ENCODE measurements at regions of chr16 and their contacts with region 1.

Region 1: GRCh38 chr16:30052671-30053372 is 12.7 kb upstream of the ALDOA start:
- DNase-seq: peak; percentile 97
- CTCF ChIP-seq: no peak

Region 2: DNA sequence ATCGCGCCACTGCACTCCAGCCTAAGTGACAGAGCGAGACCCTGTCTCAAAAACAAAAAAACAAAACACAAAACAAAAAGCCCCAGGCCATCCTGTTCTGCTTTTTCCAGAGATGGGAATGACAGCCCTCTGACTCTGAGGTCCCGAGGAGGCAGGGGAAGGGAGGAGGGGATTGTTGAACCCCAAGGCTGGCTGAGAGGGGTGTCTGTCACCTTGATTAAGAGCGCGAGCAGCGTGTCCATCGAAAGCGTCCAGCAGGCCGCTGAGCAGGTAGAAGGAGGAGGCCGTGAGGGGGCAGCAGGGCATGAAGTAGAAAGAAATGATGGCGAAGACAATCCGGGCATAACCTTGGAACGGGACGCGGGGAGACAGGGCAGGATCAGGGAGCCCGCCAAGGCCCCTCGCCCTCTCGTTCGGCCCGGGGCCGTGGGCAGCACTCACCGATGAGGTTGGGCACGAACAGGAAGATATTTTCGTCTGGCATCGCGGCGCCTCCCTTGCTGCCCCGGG is 190.4 kb before region 1 on chr16:
- CTCF ChIA-PET with region 1: no interaction called
- POLR2A ChIA-PET with region 1: no interaction called
- DNase-seq: no peak
- CTCF ChIP-seq: peak; percentile 15

Region 3: GRCh38 chr16:30032083-30032819 is 20.6 kb before region 1 on chr16:
- CTCF ChIA-PET with region 1: interaction called, 20 read pairs
- POLR2A ChIA-PET with region 1: no interaction called
- DNase-seq: peak; percentile 83
- CTCF ChIP-seq: peak; percentile 90

Region 4: DNA sequence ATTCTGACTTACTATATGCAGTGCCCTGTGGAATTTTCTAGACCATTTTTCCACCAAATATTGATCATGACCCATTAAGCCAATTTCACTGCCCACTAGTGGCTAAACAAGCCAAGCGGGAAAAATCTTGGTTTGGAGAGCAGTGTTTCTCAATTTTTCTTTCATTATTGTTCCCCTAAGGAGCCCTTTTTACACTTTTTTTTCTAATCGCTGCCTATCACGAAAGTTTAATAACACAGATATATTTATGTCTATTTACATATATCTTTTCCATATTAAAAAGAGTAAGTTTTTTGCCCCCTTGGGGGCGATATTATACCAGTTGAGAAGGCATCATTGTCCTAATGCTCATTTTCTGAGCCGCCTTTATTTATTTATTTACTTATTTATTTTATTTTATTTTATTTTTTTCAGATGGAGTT is 11.0 kb before region 1 on chr16:
- CTCF ChIA-PET with region 1: interaction called, 11 read pairs
- POLR2A ChIA-PET with region 1: no interaction called
- DNase-seq: no peak
- CTCF ChIP-seq: no peak

Region 5: DNA sequence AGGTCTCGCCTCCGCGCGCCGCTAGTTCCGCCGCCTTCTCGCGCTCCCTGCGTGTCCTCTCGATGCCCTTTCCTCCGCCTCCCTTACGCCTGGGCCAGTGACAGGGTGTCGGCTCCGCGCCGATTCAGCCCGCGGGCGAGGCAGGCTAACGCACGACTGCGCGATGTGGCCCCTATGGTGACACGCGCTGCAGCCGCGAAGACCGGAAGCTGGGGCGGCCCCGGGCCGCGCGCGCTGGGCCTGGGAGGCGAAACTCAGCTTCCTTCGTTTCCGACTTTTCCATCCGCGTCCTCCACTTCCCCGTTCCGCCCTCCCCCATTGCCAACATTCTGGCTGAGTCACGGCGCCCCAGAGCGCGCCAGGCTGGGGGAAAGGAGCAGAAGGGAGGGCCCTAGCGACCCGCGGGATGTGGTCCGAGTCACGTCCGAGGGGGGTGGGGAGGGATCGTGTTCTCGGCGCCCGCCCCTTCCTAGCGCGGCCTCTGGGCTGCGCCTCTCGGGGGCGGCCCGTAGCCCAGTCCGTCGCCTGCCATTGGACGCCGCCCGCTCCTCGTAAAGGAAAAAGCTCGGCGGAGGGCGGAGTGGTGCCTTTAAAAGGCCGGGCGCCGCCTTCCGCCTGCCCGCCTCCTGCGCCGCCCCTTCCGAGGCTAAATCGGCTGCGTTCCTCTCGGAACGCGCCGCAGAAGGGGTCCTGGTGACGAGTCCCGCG is 12.5 kb after region 1 on chr16 and contains the start of gene ALDOA:
- CTCF ChIA-PET with region 1: interaction called, 13 read pairs
- POLR2A ChIA-PET with region 1: interaction called, 7 read pairs
- DNase-seq: peak; percentile 97
- CTCF ChIP-seq: no peak

Measured in GM10248 (cell line).